Panc1 (cell line): ENCODE measurements at regions of chr5 and their contacts with region 1.

Region 1: DNA sequence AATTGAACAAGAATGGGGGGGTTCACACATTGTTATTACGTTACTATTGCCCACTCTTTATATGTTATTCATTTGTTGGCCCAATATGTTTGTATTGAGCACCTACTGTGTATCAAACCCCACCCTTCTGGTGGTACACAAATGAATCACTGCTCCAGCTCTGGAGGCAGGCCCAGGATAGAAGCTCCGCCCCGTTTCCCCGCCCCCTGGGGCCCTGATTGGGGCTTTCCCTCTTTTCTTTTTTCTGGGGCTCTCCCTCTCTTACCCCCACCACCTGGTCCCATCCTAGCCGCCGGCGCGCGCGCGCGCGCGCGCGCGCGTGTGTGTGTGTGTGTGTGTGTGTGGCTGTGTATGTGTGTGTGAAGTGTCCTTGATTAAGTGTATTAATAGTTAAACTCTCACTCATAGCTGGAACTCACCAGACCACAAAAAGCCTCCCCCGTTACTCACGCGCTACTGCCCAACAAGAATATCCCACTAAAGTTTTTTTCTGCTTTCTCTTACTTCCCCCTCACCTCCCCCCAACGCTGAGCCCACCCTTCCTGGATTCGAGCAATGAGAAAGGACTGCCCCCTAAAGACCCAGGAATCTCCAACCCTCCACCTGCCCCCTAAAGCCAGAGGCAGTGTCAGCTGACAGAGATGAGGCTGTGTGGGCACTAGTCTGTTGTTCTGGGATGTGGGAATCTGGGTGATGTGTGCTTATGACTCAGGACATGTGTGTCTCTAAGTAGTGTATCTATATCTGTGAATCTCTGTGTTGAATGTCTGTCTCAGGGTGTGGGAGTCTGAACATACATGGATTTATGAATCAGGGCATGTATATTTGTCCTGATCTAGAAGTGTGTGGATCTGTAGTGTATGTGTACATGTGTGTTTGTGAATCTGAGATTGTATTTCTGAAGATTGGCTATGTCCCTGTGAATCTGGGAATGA is 4.0 kb downstream of the CXXC5 start:
- DNase-seq: peak; percentile 72
- ATAC-seq: peak; percentile 35
- H3K4me3 ChIP-seq: peak overlapping the region; percentile 78 to 81
- H3K27ac ChIP-seq: peak overlapping the region; percentile 82
- H3K4me1 ChIP-seq: peaks cover 57% of the 10 kb centered on the region
- H3K27me3 ChIP-seq: no peaks in the 10 kb centered on the region
- CTCF ChIP-seq: no peak

Region 2: DNA sequence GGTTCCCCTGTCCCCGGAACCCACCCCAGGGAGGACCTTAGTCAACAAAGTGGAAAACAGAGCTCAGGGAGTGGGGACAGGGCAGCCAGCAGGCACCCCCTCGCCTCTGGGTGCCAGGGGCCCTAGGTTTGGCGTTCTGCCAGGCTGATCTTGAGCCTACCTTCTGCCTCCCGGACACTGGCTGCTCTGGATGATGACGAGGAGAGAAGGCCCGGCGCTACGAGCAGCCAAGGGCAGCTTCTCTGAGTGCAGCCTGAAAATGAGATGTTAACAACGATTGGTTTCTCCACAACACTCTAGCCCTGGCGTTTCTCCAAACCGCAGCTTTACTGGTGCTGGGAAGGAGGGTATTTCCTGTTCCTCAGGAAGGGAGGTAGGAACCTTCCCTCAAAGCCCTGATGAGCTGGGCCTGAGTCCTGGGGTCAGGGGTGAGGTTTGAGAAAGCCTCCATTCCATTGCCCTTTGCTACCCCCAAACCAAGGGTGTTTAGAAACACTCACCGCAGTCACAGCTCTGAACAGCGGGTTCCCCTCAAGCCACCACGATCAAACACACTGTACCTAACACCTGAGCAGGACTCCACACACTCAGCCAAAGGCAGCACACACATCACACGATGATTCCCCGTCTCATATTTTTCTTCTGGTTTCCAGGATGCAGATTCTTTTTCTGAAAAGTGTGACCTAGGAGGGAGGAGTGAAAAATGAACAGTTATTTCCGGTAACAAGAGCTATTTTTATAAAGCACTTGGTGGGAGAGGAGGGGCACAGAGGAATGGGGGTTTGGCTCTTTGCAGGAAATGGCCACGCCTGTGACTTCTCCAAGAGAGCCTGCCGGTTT is 169.8 kb before region 1 on chr5 and contains the start of gene STING1:
- CTCF ChIA-PET with region 1: no interaction called
- POLR2A ChIA-PET with region 1: interaction called, 16 read pairs
- in situ Hi-C with region 1: no loop called
- intact Hi-C with region 1: no loop called
- DNase-seq: peak; percentile 38
- ATAC-seq: peak; percentile 82
- H3K4me3 ChIP-seq: peak within 1 kb of the TSS; percentile 23 to 52
- H3K27ac ChIP-seq: peak within 1 kb of the TSS; percentile 90
- H3K4me1 ChIP-seq: peaks cover 16% of the 10 kb centered on the region
- H3K27me3 ChIP-seq: no peaks in the 10 kb centered on the region
- CTCF ChIP-seq: no peak
- total RNA-seq, gene STING1: 22.8 TPM

Region 3: GRCh38 chr5:139633295-139634027 is 18.7 kb before region 1 on chr5:
- CTCF ChIA-PET with region 1: interaction called, 14 read pairs
- POLR2A ChIA-PET with region 1: interaction called, 5 read pairs
- in situ Hi-C with region 1: no loop called
- intact Hi-C with region 1: no loop called
- DNase-seq: peak; percentile 79
- ATAC-seq: peak; percentile 70
- H3K4me3 ChIP-seq: no peak overlapping the region
- H3K27ac ChIP-seq: peak overlapping the region; percentile 19; the same call in 1 of the 2 replicates
- H3K4me1 ChIP-seq: peaks cover 32% of the 10 kb centered on the region
- H3K27me3 ChIP-seq: no peaks in the 10 kb centered on the region
- CTCF ChIP-seq: peak; percentile 98